Activated CD4-positive, alpha-beta T cell treated with anti-CD3 and anti-CD28 coated beads, Interleukin-2, amount 10 ng/mL, durations not matched to agents 7 days and 5 days (primary cell): ENCODE measurements at regions of chr1 and their contacts with region 1.

Region 1: GRCh38 chr1:206734499-206735142 is 36.0 kb upstream of the IL19 start:
- DNase-seq: peak; percentile 80
- H3K4me3 Mint-ChIP-seq: no peak overlapping the region
- H3K27ac Mint-ChIP-seq: peak overlapping the region; percentile 78
- H3K4me1 Mint-ChIP-seq: peaks cover 68% of the 10 kb centered on the region
- H3K27me3 Mint-ChIP-seq: no peaks in the 10 kb centered on the region

Region 2: DNA sequence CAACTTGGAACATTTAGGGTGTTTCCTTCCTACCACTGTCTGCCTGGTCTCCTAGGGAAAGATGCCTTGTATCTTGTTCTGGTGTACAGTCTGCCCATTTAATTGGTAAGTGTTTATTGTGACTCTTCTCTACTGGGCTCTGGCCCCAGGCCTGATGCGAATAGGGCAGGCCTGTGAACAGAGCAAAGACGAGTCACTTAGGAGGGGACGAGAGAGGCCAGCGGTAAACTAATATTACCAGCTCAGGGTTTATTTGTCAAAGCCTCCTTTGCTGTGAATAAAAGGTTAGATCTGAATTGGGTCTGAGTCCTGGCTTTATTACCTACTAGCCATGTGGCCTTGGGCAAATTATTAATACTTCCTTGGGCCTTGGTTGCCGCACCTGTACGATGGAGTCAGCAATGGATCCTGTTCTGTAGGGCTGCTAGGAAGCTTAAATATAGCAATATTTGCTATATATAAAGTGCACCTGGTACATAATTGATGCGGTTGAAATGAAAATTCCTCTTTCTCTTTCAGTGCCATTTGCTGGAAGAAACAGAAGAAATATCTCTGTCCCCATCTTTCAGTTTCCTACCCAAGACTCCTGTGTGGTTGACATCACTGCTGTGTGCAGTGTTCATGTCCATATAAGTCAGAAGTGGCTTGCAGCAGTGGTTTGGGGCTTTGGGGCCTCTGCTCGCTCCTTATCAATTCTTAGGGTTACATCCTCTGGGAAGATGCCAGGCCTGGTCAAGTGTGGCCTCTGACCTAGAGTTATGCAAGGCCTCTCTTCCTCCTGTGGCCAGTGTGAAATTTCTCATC is 17.5 kb before region 1 on chr1:
- CTCF ChIA-PET with region 1: interaction called, 25 read pairs
- POLR2A ChIA-PET with region 1: no interaction called
- DNase-seq: peak; percentile 52
- H3K4me3 Mint-ChIP-seq: no peak overlapping the region
- H3K27ac Mint-ChIP-seq: peak overlapping the region; percentile 82
- H3K4me1 Mint-ChIP-seq: peaks cover 78% of the 10 kb centered on the region
- H3K27me3 Mint-ChIP-seq: no peaks in the 10 kb centered on the region

Region 3: GRCh38 chr1:206766251-206766856 is 31.7 kb after region 1 on chr1:
- CTCF ChIA-PET with region 1: interaction called, 14 read pairs
- POLR2A ChIA-PET with region 1: no interaction called
- DNase-seq: peak; percentile 75
- H3K4me3 Mint-ChIP-seq: peak overlapping the region; percentile 52
- H3K27ac Mint-ChIP-seq: peak overlapping the region; percentile 71
- H3K4me1 Mint-ChIP-seq: peaks cover 62% of the 10 kb centered on the region
- H3K27me3 Mint-ChIP-seq: peaks cover 19% of the 10 kb centered on the region

Region 4: DNA sequence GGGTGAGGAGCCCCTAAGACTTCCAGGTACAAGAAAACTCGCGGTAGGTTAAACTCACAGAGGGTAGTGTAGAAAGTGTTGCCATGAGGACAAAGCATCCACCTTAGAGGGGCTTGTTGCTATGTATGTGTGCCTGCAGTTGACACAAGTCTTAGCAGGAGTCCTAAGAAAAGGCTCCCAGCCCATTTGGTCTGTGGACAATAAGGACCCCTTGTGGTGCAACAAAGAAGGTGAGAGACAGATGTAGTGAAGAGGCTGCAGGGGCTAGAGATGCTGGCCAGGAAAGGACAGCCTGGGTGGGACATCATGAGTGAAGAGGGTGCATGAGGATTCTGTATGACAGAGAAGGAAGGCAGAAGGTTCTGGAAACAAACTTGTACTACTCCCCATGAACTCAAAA is 74.0 kb after region 1 on chr1:
- CTCF ChIA-PET with region 1: interaction called, 102 read pairs
- POLR2A ChIA-PET with region 1: interaction called, 4 read pairs
- DNase-seq: peak; percentile 74
- H3K4me3 Mint-ChIP-seq: no peak overlapping the region
- H3K27ac Mint-ChIP-seq: no peak overlapping the region
- H3K4me1 Mint-ChIP-seq: peaks cover 54% of the 10 kb centered on the region
- H3K27me3 Mint-ChIP-seq: peaks cover 2% of the 10 kb centered on the region

Region 5: DNA sequence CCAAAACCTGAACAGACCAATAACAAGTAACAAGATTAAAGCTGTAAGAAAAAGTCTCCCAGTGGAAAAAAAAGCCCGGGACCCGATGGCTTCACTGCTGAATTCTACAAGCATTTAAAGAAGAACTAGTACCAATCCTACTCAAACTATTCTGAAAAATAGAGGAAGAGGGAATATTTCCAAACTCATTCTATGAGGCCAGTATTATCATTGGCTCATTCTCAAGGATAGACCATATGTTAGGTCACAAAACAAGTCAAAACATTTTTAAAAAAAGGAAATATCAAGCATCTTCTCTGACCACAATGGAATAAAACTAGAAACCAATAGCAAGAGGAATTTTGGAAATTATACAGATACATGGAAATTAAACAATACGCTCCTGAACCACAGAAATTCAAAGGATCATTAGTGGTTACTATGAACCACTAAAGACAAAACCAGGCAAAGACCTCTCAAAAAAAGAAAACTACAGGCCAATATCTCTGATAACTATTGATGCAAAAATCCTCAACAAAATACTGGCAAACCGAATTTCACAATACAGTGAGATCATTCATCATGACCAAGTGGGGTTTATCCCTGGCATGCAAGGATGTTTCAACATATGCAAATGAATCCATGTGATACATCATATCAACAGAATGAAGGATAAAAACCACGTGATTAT is 116.9 kb after region 1 on chr1:
- CTCF ChIA-PET with region 1: no interaction called
- POLR2A ChIA-PET with region 1: no interaction called
- DNase-seq: no peak
- H3K4me3 Mint-ChIP-seq: no peak overlapping the region
- H3K27ac Mint-ChIP-seq: no peak overlapping the region
- H3K4me1 Mint-ChIP-seq: peaks cover 2% of the 10 kb centered on the region
- H3K27me3 Mint-ChIP-seq: peaks cover 44% of the 10 kb centered on the region

Region 6: DNA sequence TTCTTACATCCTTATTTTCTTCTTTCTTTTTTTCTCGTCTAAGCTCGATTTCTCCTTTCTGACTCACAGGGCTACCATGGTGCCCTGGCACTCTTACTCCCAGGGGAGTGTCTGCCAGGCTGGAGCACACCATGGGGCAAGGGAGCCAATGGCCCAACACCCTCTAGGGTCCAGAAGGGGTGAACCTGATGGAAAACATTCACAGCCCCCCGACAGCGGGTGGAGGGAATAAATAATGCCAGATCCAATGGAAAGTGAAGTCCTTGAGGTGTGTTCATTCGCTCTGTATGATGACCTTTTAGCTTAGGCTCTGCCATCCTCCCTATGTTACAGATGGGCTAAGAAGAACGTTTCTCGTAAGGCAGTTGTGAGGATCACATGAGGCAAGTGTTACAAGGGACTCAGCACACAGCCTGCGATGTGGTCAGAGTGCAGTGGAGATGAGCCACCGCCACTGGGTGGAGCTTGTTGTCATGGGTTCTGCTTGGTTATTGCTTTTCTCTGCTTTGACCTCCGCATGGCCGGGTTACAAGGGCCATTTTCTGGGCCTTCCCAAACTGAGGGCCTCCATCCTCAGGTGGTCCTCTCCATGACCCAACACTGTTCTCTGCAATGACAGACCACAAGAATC is 190.6 kb after region 1 on chr1:
- CTCF ChIA-PET with region 1: interaction called, 12 read pairs
- POLR2A ChIA-PET with region 1: no interaction called
- DNase-seq: peak; percentile 65
- H3K4me3 Mint-ChIP-seq: no peak overlapping the region
- H3K27ac Mint-ChIP-seq: no peak overlapping the region
- H3K4me1 Mint-ChIP-seq: peaks cover 27% of the 10 kb centered on the region
- H3K27me3 Mint-ChIP-seq: no peaks in the 10 kb centered on the region

Region 7: DNA sequence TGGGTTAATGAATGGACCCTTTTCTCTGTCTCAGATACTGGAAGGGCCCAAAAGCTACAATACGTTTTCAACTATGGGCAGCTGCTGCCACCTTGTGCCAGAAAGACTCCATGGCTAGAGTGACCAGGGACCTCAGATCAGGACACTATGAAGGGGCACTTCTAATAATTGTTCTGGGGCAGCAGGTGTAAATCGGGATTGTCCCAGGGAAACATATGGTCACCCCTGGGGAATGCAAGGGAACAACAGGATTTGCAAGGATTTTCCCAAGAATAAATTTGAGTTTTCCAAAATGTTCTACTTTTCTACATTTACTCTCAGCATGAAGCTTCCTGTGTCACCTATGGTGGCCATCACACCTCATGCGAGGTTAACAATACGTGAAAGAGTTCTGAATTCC is 247.6 kb after region 1 on chr1:
- CTCF ChIA-PET with region 1: interaction called, 10 read pairs
- POLR2A ChIA-PET with region 1: no interaction called
- DNase-seq: peak; percentile 70
- H3K4me3 Mint-ChIP-seq: no peak overlapping the region
- H3K27ac Mint-ChIP-seq: no peak overlapping the region
- H3K4me1 Mint-ChIP-seq: no peaks in the 10 kb centered on the region
- H3K27me3 Mint-ChIP-seq: peaks cover 35% of the 10 kb centered on the region